ENCODE measurements at regions of chr21 and their contacts with region 1.

Region 1: DNA sequence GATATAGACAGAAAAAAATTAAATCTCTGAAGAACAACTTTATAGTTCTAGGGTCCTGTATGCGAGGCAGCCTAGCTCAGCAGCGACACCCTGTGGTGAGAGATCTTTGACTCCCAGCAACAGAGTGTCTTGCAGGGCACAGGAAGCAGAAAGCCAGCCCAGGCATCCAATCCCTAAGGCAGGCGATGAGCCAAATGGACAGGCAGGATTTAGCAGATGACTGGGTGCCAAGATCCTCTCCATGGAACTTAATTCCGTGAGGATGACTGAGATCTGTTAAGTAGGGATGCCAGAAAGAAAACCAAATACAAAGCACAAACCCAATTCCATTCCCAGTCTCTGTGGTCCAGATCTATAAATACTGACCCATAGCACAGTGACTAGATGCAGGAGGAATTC is 38.8 kb downstream of the HLCS start:
- DNase-seq: peak; percentile 43 to 66
- H3K4me3 ChIP-seq: no peak overlapping the region
- H3K27ac ChIP-seq: no peak overlapping the region
- H3K4me1 ChIP-seq: no peaks in the 10 kb centered on the region
- H3K27me3 ChIP-seq: no peaks in the 10 kb centered on the region
- CTCF ChIP-seq: peak; percentile 87

Region 2: DNA sequence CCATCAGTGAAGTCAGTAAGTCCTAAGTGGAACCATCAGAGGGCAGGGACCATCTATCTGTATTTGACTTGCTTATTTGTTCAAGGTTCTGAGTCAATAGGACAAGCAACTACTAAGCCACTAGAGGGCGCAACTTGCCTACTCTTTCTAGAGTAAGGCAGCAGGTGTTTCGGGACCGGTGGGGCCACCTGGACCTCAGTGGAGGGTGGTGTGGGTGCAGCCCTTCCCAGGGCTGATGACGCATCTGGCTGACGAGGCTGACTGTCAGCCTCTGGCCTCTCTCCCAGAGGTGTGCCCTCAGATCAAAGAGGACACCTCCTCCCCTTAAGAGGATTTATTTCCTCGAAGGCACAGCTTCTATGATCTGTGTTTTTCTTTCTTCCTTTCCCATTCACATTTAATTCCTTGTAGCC is 786.2 kb before region 1 on chr21:
- CTCF ChIA-PET with region 1: no interaction called
- POLR2A ChIA-PET with region 1: no interaction called
- intact Hi-C with region 1: loop called (anchors 5 kb)
- DNase-seq: peak; percentile 91 to 96
- H3K4me3 ChIP-seq: no peak overlapping the region
- H3K27ac ChIP-seq: peak overlapping the region; percentile 66
- H3K4me1 ChIP-seq: peaks cover 9% of the 10 kb centered on the region
- H3K27me3 ChIP-seq: no peaks in the 10 kb centered on the region
- CTCF ChIP-seq: peak; percentile 81

Region 3: GRCh38 chr21:36419996-36420395 is 507.7 kb before region 1 on chr21:
- CTCF ChIA-PET with region 1: no interaction called
- POLR2A ChIA-PET with region 1: no interaction called
- intact Hi-C with region 1: loop called (anchors 1 kb)
- DNase-seq: peak; percentile 66 to 70
- H3K4me3 ChIP-seq: no peak overlapping the region
- H3K27ac ChIP-seq: no peak overlapping the region
- H3K4me1 ChIP-seq: no peaks in the 10 kb centered on the region
- H3K27me3 ChIP-seq: no peaks in the 10 kb centered on the region
- CTCF ChIP-seq: peak; percentile 81

Region 4: GRCh38 chr21:36429947-36430546 is 497.7 kb before region 1 on chr21:
- CTCF ChIA-PET with region 1: interaction called, 13 read pairs
- POLR2A ChIA-PET with region 1: no interaction called
- intact Hi-C with region 1: no loop called
- DNase-seq: peak; percentile 90 to 97
- H3K4me3 ChIP-seq: peak overlapping the region; percentile 57
- H3K27ac ChIP-seq: peak overlapping the region; percentile 96
- H3K4me1 ChIP-seq: peaks cover 26% of the 10 kb centered on the region
- H3K27me3 ChIP-seq: no peaks in the 10 kb centered on the region
- CTCF ChIP-seq: no peak

Region 5: GRCh38 chr21:36524477-36524876 is 403.2 kb before region 1 on chr21:
- CTCF ChIA-PET with region 1: no interaction called
- POLR2A ChIA-PET with region 1: interaction called, 20 read pairs
- intact Hi-C with region 1: no loop called
- DNase-seq: no peak
- H3K4me3 ChIP-seq: no peak overlapping the region
- H3K27ac ChIP-seq: no peak overlapping the region
- H3K4me1 ChIP-seq: no peaks in the 10 kb centered on the region
- H3K27me3 ChIP-seq: no peaks in the 10 kb centered on the region
- CTCF ChIP-seq: no peak

Region 6: GRCh38 chr21:36630485-36631206 is 297.1 kb before region 1 on chr21:
- CTCF ChIA-PET with region 1: no interaction called
- POLR2A ChIA-PET with region 1: no interaction called
- intact Hi-C with region 1: loop called (anchors 1 kb)
- DNase-seq: peak; percentile 43 to 61
- H3K4me3 ChIP-seq: no peak overlapping the region
- H3K27ac ChIP-seq: no peak overlapping the region
- H3K4me1 ChIP-seq: peaks cover 30% of the 10 kb centered on the region
- H3K27me3 ChIP-seq: no peaks in the 10 kb centered on the region
- CTCF ChIP-seq: peak; percentile 81